ENCODE measurements at regions of chr15 and their contacts with region 1.

Region 1: DNA sequence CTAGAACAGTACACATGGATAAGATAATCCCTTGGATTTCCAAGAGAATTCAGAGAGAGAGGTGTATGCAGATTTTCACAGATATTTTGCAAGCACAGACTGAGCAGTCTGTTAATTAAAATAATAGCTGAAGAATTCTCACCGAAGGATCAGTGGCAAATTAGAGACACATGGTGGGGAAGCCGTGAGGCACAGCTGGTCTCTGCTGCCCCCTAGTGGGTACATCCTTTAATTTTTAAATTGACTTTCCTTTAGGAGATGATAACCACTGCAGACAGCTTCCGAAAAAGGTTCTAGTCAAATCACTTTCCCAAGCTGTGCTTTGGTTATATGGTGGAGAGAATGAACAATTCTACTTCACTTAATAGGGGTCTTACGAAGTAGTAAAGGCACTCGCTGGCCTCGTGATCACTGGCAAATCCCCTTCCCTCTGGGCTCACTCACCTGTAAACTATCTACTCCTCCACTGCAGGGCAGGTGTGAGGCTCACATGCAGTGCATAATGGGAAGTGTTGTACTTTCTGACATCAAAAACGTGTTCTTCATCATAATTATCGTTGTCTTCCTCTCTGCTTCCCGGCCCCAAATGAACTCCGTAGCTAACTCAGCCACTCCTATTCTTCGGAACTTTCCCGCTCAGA is 19.5 kb downstream of the MESD start:
- H3K4me3 Mint-ChIP-seq: no peak overlapping the region
- H3K27ac Mint-ChIP-seq: no peak overlapping the region
- H3K4me1 Mint-ChIP-seq: no peaks in the 10 kb centered on the region
- H3K27me3 Mint-ChIP-seq: no peaks in the 10 kb centered on the region

Region 2: GRCh38 chr15:80420658-80421057 is 549.5 kb before region 1 on chr15:
- intact Hi-C with region 1: loop called (anchors 2 kb)
- H3K4me3 Mint-ChIP-seq: no peak overlapping the region
- H3K27ac Mint-ChIP-seq: no peak overlapping the region
- H3K4me1 Mint-ChIP-seq: no peaks in the 10 kb centered on the region
- H3K27me3 Mint-ChIP-seq: peaks cover 36% of the 10 kb centered on the region